IMR-90 (cell line): ENCODE measurements at regions of chr2 and their contacts with region 1.

Region 1: DNA sequence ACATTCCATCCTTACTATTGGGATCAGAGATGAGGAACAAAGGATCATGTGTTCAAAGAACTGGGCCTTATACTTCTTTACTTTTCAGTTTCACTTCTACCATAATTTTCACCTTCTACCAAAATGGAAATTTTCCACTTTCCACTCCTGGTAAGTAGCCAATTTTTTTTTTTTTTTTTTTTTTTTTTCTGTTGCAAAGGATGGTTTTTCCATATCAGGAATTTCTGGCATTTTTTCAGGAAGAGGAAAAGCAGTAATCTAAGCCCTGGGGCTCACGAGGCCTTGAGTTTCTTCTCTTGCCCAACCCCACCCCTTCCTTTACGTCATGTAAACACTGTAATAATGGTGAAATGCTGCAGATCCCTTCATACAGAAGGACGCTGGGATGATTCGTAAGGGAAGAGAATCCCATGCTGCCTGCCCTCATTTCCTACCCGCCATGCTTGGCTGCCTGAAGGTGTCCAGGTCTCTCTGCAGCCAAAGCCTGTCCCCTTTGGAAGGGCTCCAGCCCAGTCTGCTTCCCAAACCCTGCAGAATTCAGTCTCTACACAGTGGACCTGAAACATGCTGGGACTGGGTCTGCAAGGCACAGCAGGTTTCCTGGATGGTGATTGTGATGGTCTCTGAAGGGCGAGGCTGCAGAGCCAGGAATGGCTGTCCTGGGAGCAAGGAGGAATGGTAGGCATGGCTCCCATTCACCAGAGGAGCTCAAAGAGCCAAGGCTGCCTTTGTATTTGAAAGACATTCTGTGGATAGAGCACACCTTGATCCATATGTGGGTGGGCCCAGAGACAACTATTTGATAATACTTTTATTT is 57.0 kb downstream of the EFR3B start:
- DNase-seq: peak; percentile 80
- ATAC-seq: peak; percentile 63
- H3K4me3 ChIP-seq: no peak overlapping the region
- H3K27ac ChIP-seq: peak overlapping the region; percentile 39; the same call in 1 of the 2 replicates
- H3K4me1 ChIP-seq: peaks cover 6% of the 10 kb centered on the region
- H3K27me3 ChIP-seq: no peaks in the 10 kb centered on the region
- CTCF ChIP-seq: no peak
- POLR2A ChIP-seq: no peak
- RAD21 ChIP-seq: no peak

Region 2: GRCh38 chr2:24930768-24931167 is 168.1 kb before region 1 on chr2:
- CTCF ChIA-PET with region 1: no interaction called
- POLR2A ChIA-PET with region 1: no interaction called
- dilution Hi-C with region 1: no loop called
- in situ Hi-C with region 1: no loop called
- intact Hi-C with region 1: no loop called
- DNase-seq: peak; percentile 46
- ATAC-seq: peak; percentile 64
- H3K4me3 ChIP-seq: no peak overlapping the region
- H3K27ac ChIP-seq: no peak overlapping the region
- H3K4me1 ChIP-seq: peaks cover 3% of the 10 kb centered on the region
- H3K27me3 ChIP-seq: peaks cover 2% of the 10 kb centered on the region; the same call in 1 of the 2 replicates
- CTCF ChIP-seq: no peak
- POLR2A ChIP-seq: no peak
- RAD21 ChIP-seq: no peak

Region 3: DNA sequence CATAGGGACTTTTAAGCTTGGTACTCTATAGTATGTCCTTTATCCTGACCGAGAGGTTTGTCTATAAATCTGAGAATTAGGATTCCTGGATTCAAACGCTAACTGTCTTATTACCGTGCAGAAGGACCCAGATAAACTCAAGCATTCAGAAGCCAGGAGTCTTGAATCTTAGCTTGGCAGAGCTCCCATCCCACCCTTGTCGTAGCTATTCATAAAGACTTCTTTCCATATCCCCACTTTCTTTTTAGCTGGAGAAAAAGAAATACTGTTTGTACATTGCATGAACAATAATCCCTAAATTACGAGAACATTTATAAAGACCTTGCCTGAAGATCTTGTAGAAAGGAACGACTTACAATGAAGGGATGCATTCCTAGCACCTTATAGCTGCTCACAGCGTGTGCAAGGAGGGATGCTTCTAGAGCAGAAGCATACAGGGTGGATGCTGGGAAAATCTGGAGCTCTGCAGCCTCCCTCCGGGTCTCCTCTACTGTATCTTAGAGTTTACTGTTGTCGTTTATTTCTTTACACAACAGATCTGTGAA is 43.4 kb before region 1 on chr2:
- CTCF ChIA-PET with region 1: no interaction called
- POLR2A ChIA-PET with region 1: interaction called, 21 read pairs
- dilution Hi-C with region 1: no loop called
- in situ Hi-C with region 1: no loop called
- intact Hi-C with region 1: no loop called
- DNase-seq: no peak
- ATAC-seq: no peak
- H3K4me3 ChIP-seq: no peak overlapping the region
- H3K27ac ChIP-seq: no peak overlapping the region
- H3K4me1 ChIP-seq: no peaks in the 10 kb centered on the region
- H3K27me3 ChIP-seq: no peaks in the 10 kb centered on the region; the same call in none of the 2 replicates
- CTCF ChIP-seq: no peak
- POLR2A ChIP-seq: no peak
- RAD21 ChIP-seq: no peak